Common myeloid progenitor, CD34-positive (primary cell): ENCODE measurements at regions of chr2 and their contacts with region 1.

Region 1: DNA sequence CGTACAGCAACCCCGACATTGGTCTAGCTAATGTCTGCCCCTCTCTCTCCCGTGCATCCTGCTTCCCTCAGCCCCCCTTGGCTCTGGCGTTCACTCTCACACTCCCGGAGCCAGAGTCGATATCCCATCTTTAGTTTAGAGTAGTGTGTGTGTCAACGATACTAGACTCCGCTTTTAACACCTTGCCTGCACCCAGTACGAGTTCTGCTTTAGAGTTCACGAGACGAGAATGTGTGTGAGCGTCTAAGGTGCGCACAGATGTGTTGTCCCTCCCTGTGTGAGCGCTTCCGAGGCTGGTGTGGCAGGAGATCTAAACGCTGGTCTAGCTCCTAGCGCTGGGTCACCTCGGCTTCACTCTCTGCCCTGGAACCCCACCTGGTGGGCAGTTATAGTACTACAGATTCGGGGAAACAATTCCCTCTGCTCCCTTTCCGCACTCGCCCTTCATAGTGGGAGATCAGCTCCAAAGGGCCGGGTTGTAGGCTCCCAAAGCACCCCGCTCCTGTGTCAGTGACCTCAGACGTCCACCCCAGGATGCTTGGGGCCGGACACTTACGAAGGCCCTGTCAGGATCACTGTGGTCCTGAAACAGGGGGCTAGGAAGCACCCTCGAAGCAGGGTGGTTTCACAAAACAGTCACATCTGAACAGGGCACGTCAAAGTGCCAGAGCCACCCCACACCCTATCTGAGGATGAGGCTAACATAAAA is 2.6 kb upstream of the CYP26B1 start:
- DNase-seq: peak; percentile 60 to 76 (median 75)
- H3K4me3 ChIP-seq: peak overlapping the region in 5 of 7 experiments; percentile 20 to 63 (median 62)
- H3K27ac ChIP-seq: no peak overlapping the region
- H3K4me1 ChIP-seq: peaks cover 0 to 45% (median 29%) of the 10 kb centered on the region in 4 experiments
- H3K27me3 ChIP-seq: peaks cover 0 to 83% (median 43%) of the 10 kb centered on the region in 5 experiments

Region 2: GRCh38 chr2:71545572-71546274 is 604.6 kb before region 1 on chr2:
- CTCF ChIA-PET with region 1: interaction called, 23 read pairs
- POLR2A ChIA-PET with region 1: no interaction called
- DNase-seq: peak; percentile 74 to 85 (median 79)
- H3K4me3 ChIP-seq: peak overlapping the region in 4 of 7 experiments; percentile 4 to 71 (median 53)
- H3K27ac ChIP-seq: no peak overlapping the region
- H3K4me1 ChIP-seq: peaks cover 0 to 5% (median 4%) of the 10 kb centered on the region in 4 experiments
- H3K27me3 ChIP-seq: peaks cover 0 to 9% (median 0%) of the 10 kb centered on the region in 5 experiments

Region 3: GRCh38 chr2:71923887-71924533 is 226.3 kb before region 1 on chr2:
- CTCF ChIA-PET with region 1: interaction called, 23 read pairs
- POLR2A ChIA-PET with region 1: no interaction called
- DNase-seq: peak; percentile 52 to 76 (median 70)
- H3K4me3 ChIP-seq: no peak overlapping the region
- H3K27ac ChIP-seq: no peak overlapping the region
- H3K4me1 ChIP-seq: no peaks in the 10 kb centered on the region
- H3K27me3 ChIP-seq: no peaks in the 10 kb centered on the region

Region 4: DNA sequence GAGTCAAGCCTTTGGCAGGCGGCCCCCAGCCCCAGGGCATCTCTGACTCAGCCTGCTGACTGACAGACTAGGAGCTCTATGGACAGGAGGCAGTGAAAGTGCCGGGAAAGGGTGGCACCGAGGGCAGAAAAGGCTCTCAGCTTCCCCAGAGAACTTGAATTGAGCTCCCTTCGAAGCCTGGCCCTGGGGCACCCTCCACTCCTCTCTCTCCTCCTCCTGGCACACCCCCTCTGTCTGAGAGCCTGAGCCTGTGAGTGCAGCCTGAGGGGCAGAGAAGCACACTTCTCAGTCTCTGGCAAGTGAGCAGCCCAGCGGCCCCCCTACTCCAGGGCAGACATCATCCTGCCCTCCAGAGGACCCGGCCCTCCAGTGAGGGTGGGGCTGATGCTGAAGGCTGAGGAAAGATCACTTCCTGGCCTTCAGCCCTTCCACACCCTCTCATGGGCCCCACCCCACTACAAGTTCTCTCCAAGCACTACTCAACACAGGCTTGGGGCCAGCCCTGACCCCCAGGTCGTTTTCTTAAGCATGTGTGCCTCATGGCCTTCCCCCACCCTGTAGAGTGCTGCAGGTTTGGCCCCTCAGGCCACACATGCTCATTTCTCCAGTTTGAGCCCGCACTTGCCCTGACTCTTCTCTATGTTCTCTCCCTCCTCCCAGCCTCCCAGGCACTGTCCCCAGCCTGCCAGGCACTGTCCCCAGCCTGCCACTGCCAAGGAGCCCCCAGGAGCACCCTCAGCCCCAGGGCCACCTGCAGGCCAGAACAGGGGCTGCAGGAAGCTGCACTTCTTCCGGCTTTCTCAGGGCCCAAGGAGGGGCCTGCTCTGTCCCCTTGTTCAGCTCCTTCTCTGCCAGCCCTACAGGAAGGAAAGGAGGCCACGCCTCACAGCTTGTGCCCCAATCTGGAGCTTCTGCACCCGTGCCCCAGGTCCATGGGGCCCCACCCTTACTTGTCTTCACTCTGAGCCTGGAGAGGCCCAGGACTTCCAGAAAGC is 34.5 kb before region 1 on chr2:
- CTCF ChIA-PET with region 1: no interaction called
- POLR2A ChIA-PET with region 1: no interaction called
- DNase-seq: peak in 1 of 3 donors; percentile 12
- H3K4me3 ChIP-seq: no peak overlapping the region
- H3K27ac ChIP-seq: no peak overlapping the region
- H3K4me1 ChIP-seq: peaks cover 0 to 3% (median 0%) of the 10 kb centered on the region in 4 experiments
- H3K27me3 ChIP-seq: peaks cover 0 to 3% (median 0%) of the 10 kb centered on the region in 5 experiments

Region 5: DNA sequence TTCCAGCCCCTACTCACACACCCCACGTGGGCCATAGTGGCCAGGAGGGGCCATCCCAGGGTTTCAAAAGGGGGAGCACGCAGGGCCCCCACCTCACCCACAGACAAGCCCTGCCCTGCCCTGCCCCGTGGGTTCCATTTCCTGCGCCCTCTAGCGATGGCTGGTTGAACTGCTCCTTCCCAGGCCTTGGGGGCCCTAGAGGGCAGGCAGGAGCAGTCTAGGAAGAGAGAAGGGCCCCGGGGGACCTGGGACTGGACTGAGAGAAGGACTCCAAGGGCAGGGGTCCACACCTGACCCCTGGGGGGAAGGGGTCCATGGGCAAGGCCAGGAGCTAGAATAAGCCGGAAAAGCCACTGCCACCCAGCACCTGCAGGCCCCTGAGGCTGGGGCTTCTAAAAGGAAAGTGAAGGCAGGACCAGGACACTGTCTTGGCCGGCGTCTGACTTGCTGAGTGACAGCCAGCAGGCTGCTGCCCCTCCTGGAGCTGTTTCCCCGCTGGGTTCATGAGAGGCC is 12.8 kb before region 1 on chr2:
- CTCF ChIA-PET with region 1: interaction called, 52 read pairs
- POLR2A ChIA-PET with region 1: no interaction called
- DNase-seq: peak; percentile 40 to 56 (median 48)
- H3K4me3 ChIP-seq: peak overlapping the region in 1 of 7 experiments; percentile 48
- H3K27ac ChIP-seq: no peak overlapping the region
- H3K4me1 ChIP-seq: no peaks in the 10 kb centered on the region
- H3K27me3 ChIP-seq: peaks cover 0 to 17% (median 6%) of the 10 kb centered on the region in 5 experiments

Region 6: GRCh38 chr2:72293620-72294019 is 143.3 kb after region 1 on chr2:
- CTCF ChIA-PET with region 1: no interaction called
- POLR2A ChIA-PET with region 1: no interaction called
- DNase-seq: no peak
- H3K4me3 ChIP-seq: no peak overlapping the region
- H3K27ac ChIP-seq: no peak overlapping the region
- H3K4me1 ChIP-seq: peaks cover 0 to 9% (median 2%) of the 10 kb centered on the region in 4 experiments
- H3K27me3 ChIP-seq: no peaks in the 10 kb centered on the region